IMR-90 (cell line): ENCODE measurements at regions of chr4 and their contacts with region 1.

Region 1: DNA sequence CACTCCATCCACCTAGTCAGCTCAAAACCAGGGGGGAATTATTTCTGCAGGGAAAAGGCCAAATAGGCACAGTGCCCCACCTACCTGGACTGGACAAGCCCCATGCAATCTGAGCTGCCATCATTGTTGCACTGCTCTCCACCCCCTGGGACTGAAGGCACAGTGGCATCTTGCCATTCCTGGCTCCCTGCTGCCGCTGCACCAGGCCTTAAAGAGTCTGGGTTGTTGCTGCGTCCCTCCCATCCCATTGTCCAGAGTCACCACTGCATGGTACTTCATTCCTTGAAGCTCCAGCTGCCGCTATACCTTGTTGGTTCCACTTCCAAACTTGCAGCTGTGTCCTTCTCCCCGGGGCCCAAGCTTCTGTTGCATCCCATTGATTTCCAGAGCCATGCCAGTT is 629.7 kb downstream of the STIM2 start:
- DNase-seq: no peak
- ATAC-seq: no peak
- H3K4me3 ChIP-seq: no peak overlapping the region
- H3K27ac ChIP-seq: no peak overlapping the region
- H3K4me1 ChIP-seq: no peaks in the 10 kb centered on the region
- H3K27me3 ChIP-seq: no peaks in the 10 kb centered on the region
- CTCF ChIP-seq: no peak
- POLR2A ChIP-seq: no peak
- RAD21 ChIP-seq: no peak

Region 2: GRCh38 chr4:28508636-28509035 is 1018.3 kb after region 1 on chr4:
- CTCF ChIA-PET with region 1: no interaction called
- POLR2A ChIA-PET with region 1: no interaction called
- dilution Hi-C with region 1: no loop called
- in situ Hi-C with region 1: no loop called
- intact Hi-C with region 1: loop called (anchors 5 kb)
- DNase-seq: no peak
- ATAC-seq: no peak
- H3K4me3 ChIP-seq: no peak overlapping the region
- H3K27ac ChIP-seq: no peak overlapping the region
- H3K4me1 ChIP-seq: no peaks in the 10 kb centered on the region
- H3K27me3 ChIP-seq: no peaks in the 10 kb centered on the region
- CTCF ChIP-seq: no peak
- POLR2A ChIP-seq: no peak
- RAD21 ChIP-seq: no peak